ENCODE measurements at regions of chr3 and their contacts with region 1.

Region 1: GRCh38 chr3:155908086-155908485 is 37.6 kb downstream of the GMPS start:
- DNase-seq: peak in 1 of 9 donors; percentile 3
- ATAC-seq: no peak
- H3K4me3 ChIP-seq: no peak overlapping the region
- H3K4me3 Mint-ChIP-seq: peak overlapping the region in 8 of 10 donors; percentile 2 to 50 (median 28)
- H3K27ac ChIP-seq: no peak overlapping the region
- H3K27ac Mint-ChIP-seq: peak overlapping the region; percentile 6 to 83 (median 45)
- H3K4me1 ChIP-seq: peaks cover 6 to 9% of the 10 kb centered on the region in 2 donors
- H3K4me1 Mint-ChIP-seq: peaks cover 14 to 18% (median 18%) of the 10 kb centered on the region in 7 donors
- H3K27me3 ChIP-seq: no peaks in the 10 kb centered on the region
- H3K27me3 Mint-ChIP-seq: no peaks in the 10 kb centered on the region

Region 2: DNA sequence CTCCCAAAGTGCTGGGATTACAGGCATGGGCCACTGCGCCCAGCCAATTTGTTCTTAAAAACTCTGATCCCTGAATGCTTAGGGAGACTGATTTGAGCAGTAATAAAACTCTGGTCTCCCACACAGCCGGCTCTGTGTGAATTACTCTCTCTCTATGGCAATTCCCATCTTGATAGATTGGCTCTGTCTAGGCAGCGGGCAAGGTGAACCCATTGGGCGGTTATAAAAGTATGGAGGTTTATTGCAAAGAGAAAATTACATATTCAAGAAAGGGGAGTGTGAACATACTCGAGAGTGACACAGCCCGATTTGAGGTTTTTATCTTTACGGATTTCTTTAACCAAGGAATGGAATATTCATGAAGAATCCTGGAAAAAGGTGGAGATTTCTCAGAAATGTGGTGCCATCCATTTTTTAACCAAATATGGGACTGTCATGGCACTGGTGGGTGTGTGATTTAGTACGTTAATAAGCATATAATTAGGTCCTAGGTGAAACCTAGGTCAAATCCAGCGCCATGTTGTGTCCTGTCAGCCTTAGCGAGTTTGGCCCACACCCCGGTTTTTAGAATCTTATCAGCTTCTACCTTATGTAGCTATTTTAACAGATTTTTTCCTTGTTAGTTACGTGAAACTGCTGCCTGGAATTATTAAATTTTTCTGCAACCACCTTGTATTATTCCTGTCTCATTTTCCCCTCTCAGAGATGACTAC is 44.9 kb before region 1 on chr3:
- CTCF ChIA-PET with region 1: no interaction called
- POLR2A ChIA-PET with region 1: no interaction called
- intact Hi-C with region 1: no loop called
- DNase-seq: no peak
- ATAC-seq: no peak
- H3K4me3 ChIP-seq: no peak overlapping the region
- H3K4me3 Mint-ChIP-seq: peak overlapping the region in 1 of 10 donors; percentile 45
- H3K27ac ChIP-seq: no peak overlapping the region
- H3K27ac Mint-ChIP-seq: peak overlapping the region in 4 of 9 donors; percentile 2 to 85 (median 53)
- H3K4me1 ChIP-seq: no peaks in the 10 kb centered on the region
- H3K4me1 Mint-ChIP-seq: peaks cover 0 to 31% (median 13%) of the 10 kb centered on the region in 7 donors
- H3K27me3 ChIP-seq: no peaks in the 10 kb centered on the region
- H3K27me3 Mint-ChIP-seq: no peaks in the 10 kb centered on the region

Region 3: DNA sequence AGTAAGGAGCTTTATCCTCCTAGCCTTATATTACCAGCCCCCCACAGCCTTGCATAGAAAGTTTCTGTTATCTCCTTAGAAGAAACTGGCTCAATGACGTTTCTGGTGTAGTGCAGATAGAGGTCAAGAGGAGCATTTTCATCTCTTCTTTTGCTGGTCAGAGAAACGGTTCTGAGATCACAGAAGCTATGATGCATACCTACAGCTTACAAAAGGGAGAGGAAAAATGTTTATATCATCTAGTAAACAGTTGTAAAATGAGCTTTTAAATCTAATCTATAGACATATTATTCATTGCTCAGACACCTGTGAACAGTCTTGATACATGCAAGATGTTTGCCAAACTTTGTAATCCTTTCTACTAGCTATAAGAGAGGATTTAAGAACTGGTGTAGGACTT is 30.3 kb after region 1 on chr3:
- CTCF ChIA-PET with region 1: no interaction called
- POLR2A ChIA-PET with region 1: no interaction called
- intact Hi-C with region 1: loop called in 1 of 2 experiments (anchors 5 kb)
- DNase-seq: no peak
- ATAC-seq: no peak
- H3K4me3 ChIP-seq: no peak overlapping the region
- H3K4me3 Mint-ChIP-seq: no peak overlapping the region
- H3K27ac ChIP-seq: no peak overlapping the region
- H3K27ac Mint-ChIP-seq: peak overlapping the region in 2 of 9 donors; percentile 3 to 23
- H3K4me1 ChIP-seq: no peaks in the 10 kb centered on the region
- H3K4me1 Mint-ChIP-seq: no peaks in the 10 kb centered on the region
- H3K27me3 ChIP-seq: no peaks in the 10 kb centered on the region
- H3K27me3 Mint-ChIP-seq: no peaks in the 10 kb centered on the region

Region 4: GRCh38 chr3:155948476-155948875 is 40.4 kb after region 1 on chr3:
- CTCF ChIA-PET with region 1: no interaction called
- POLR2A ChIA-PET with region 1: no interaction called
- intact Hi-C with region 1: no loop called
- DNase-seq: no peak
- ATAC-seq: no peak
- H3K4me3 ChIP-seq: no peak overlapping the region
- H3K4me3 Mint-ChIP-seq: no peak overlapping the region
- H3K27ac ChIP-seq: no peak overlapping the region
- H3K27ac Mint-ChIP-seq: no peak overlapping the region
- H3K4me1 ChIP-seq: no peaks in the 10 kb centered on the region
- H3K4me1 Mint-ChIP-seq: no peaks in the 10 kb centered on the region
- H3K27me3 ChIP-seq: no peaks in the 10 kb centered on the region
- H3K27me3 Mint-ChIP-seq: no peaks in the 10 kb centered on the region

Region 5: DNA sequence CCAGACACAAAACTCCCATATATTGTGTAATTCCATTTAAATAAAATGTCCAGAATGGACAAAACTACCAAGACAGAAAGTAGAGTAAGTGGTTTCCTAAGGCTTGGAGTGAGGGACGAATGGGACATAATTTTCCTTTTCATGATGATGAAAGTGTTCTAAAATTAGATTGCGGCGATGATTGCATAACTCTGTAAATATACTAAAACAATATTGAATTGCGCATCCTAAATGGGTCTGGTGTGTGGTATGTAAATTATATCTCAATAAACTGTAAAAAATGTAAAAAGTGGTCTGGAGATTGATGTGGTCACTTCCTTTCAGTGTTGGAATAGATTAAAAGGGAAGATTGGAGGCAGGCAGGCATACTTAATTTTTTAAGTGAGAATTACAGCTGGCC is 106.4 kb after region 1 on chr3:
- CTCF ChIA-PET with region 1: no interaction called
- POLR2A ChIA-PET with region 1: no interaction called
- intact Hi-C with region 1: no loop called
- DNase-seq: no peak
- ATAC-seq: no peak
- H3K4me3 ChIP-seq: no peak overlapping the region
- H3K4me3 Mint-ChIP-seq: no peak overlapping the region
- H3K27ac ChIP-seq: no peak overlapping the region
- H3K27ac Mint-ChIP-seq: no peak overlapping the region
- H3K4me1 ChIP-seq: no peaks in the 10 kb centered on the region
- H3K4me1 Mint-ChIP-seq: no peaks in the 10 kb centered on the region
- H3K27me3 ChIP-seq: no peaks in the 10 kb centered on the region
- H3K27me3 Mint-ChIP-seq: peaks cover 0 to 16% (median 3%) of the 10 kb centered on the region in 5 donors

Measured in naive thymus-derived CD4-positive, alpha-beta T cell (primary cell).